ENCODE measurements at regions of chr9 and their contacts with region 1.

Region 1: DNA sequence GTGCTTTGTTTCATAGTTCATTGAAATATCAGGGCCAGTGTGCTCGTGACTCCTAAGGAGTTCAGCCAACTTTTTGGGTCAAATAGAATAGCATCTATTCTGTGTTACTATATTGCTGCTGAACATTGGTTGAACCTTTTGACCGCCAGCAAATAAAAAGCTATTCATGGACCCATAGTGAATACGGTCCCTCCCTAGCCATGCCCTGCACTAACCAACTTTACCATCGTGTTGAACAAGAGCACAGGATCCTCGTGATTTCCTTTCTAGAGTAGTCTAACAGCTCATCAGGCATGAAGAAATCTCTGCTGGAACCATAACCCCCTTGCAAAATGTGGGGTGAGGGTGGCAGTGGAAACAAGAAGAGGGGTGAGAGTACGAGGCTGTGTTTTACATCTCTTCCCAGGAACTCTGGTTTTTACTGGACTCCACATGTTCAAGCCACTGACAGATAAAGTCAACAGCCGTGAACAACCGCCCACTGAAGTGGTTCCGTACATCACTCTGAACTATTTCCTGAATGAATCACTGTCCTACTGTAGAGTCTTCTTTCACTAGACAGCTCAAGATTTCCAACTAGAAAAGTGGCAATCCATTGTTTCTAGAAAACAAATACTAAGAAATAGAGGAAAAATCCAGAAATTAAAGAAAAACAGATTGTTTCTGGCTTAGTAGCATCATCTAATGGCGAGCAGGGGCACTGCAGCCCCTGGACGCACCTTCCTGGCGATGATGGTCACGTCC is 70.1 kb upstream of the SPATA31E1 start:
- DNase-seq: no peak
- ATAC-seq: peak; percentile 76
- H3K4me3 ChIP-seq: no peak overlapping the region
- H3K27ac ChIP-seq: no peak overlapping the region
- H3K4me1 ChIP-seq: no peaks in the 10 kb centered on the region
- H3K27me3 ChIP-seq: no peaks in the 10 kb centered on the region
- CTCF ChIP-seq: peak; percentile 87

Region 2: DNA sequence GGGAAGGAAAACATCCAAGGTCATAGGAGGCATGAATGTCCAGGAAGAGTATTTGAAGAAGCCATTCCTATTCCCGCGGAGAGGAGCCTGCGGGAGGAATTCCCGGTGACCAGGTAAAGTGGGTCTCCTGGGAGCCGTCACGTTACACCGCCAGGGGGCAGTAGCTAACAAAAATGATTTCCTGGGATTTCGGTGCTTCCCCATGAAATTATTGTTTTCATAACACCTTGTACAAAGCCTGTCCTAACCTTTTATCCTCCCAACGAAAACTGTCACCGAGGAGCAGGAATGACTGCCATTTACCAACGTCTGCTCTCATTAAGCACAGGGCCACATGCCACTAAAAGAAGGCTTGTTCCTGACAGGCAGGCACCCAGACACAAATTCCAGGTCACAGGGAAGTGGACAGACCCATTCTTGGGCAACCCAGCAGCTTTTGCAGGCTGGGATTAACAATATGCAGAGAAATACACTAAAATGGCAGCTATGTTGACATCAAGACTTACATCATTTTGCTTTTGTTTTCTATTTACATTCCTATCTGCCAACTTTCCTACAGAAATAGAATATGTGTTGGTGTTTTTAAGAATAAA is 127.8 kb before region 1 on chr9:
- intact Hi-C with region 1: loop called (anchors 5 kb)
- DNase-seq: no peak
- ATAC-seq: peak; percentile 56
- H3K4me3 ChIP-seq: no peak overlapping the region
- H3K27ac ChIP-seq: no peak overlapping the region
- H3K4me1 ChIP-seq: peaks cover 17% of the 10 kb centered on the region
- H3K27me3 ChIP-seq: no peaks in the 10 kb centered on the region
- CTCF ChIP-seq: peak; percentile 74

Region 3: DNA sequence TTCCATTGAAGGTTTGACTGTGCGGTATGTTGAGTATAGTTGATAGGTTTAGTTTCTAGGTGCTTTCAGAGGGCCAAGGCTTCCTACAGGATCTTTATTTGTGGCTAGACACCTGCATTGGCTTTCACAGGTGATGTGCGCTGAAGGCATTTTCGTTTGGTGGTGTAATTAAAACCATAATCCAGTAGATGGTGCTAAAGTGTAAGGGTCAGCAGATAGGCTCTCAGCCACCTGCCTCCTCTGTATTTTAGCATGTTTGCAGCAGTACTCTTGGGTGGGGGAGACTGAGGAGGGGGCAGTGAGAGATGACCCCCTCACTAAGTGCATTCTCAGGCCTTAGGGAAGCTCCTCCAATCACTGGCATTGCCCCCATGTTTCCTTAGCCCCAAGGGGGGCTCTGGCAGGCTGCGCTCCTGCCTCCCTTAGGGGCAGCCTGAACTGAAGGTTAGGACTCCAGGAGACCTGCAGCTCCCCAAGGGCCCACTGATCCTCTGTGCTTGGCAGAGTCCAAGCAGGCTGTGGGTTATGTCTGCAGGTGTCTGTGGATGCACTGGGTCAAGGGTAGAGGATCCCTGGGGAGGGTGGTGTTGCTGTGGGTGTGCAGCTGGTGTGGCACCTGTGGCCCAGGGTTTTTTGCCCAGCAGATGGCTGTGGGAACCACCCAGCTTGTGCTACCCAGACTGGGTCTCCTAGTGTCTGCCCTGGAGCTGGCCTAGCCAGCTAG is 138.4 kb after region 1 on chr9:
- intact Hi-C with region 1: no loop called
- DNase-seq: no peak
- ATAC-seq: peak; percentile 88
- H3K4me3 ChIP-seq: no peak overlapping the region
- H3K27ac ChIP-seq: no peak overlapping the region
- H3K4me1 ChIP-seq: no peaks in the 10 kb centered on the region
- H3K27me3 ChIP-seq: no peaks in the 10 kb centered on the region
- CTCF ChIP-seq: peak; percentile 54

Measured in upper lobe of right lung (tissue), 1 donor.